Gastrocnemius medialis (tissue), 4 donors: ENCODE measurements at regions of chr6 and their contacts with region 1.

Region 1: DNA sequence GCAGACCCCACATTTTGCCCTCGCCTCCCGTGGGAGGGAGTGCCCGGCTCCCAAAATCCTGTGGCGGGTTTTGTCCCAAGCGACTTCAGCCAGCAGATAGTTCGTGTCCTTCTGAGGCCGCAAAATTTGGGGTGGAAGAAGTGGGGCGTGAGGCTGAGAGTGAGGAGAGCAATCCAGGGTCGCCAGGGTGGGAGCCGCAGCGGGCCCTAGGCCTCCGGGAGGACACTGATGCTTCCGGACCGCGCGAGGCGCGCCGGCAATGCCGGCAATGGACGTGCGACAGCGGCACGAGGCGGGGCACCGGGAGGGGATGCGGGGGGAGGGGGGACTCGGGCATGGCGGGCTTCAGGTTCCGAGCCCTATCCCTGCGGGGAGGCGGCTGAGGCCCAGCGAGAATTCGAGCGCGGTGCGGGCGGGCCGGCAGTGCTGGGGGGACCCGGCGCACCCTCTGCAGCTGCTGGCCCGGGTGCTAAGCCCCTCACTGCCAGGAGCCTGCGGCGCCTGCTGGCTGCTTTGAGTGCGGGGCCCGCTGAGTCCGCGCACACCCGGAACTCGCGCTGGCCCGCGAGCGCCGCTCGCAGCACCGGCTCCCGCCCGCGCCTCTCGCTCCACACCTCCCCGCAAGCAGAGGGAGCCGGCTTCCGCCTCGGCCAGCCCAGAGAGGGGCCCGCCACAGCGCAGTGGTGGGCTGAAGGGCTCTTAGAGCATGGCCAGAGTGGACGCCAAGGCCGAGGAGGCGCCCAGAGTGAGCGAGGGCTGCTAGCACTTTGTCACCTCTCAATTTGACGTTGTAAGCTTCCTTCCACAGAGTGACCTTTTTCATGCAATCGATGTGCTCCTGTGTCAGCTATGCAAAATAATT is 143.8 kb downstream of the LPA start:
- DNase-seq: peak; percentile 29 to 49
- ATAC-seq: peak; percentile 91 to 97
- H3K4me3 ChIP-seq: peak overlapping the region; percentile 64 to 75 (median 65)
- H3K27ac ChIP-seq: peak overlapping the region in 3 of 4 donors; percentile 16 to 59 (median 19)
- H3K4me1 ChIP-seq: no peaks in the 10 kb centered on the region
- H3K27me3 ChIP-seq: no peaks in the 10 kb centered on the region
- CTCF ChIP-seq: peak in 3 of 5 experiments; percentile 3 to 85 (median 8)
- POLR2A ChIP-seq: no peak

Region 2: DNA sequence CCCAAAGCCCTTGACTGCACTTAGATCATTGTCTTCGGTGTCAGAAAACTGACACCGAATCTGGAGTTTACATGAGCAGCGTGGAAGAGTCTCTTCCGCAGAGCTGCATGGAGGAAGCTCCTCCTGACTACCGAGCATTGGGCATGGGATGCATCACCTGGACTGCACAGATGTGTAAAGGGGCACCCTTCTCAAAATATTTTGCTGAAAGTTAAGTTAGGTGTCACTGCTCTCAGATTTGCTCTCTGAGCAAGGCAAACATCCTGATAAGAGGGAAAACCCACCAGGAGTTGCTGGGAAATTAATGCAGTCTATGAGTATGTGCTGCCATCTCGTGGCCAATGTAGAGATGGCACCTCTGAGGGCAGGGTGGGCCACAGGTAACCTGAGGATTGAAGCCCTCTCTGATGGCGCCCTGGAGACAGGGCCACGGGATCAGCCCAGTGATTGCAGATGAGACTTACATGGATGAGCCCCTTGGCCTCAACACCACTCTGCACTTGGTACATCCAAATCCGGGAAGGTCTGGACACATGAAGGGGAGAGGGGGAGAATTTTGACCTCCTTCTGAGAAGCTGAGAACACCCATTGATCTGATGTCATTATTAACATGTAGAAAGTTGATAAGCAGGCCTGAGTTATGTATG is 13.9 kb after region 1 on chr6:
- in situ Hi-C with region 1: no loop called
- intact Hi-C with region 1: loop called (anchors 1 kb)
- DNase-seq: peak in 1 of 2 donors; percentile 25
- ATAC-seq: peak in 1 of 2 donors; percentile 66
- H3K4me3 ChIP-seq: no peak overlapping the region
- H3K27ac ChIP-seq: no peak overlapping the region
- H3K4me1 ChIP-seq: peaks cover 0 to 3% of the 10 kb centered on the region in 2 donors
- H3K27me3 ChIP-seq: peaks cover 0 to 3% (median 0%) of the 10 kb centered on the region in 3 donors
- CTCF ChIP-seq: peak; percentile 82 to 92 (median 85)
- POLR2A ChIP-seq: no peak